Activated naive CD4-positive, alpha-beta T cell treated with anti-CD3 and anti-CD28 coated beads for 36 hours (primary cell): ENCODE measurements at regions of chr3 and their contacts with region 1.

Region 1: GRCh38 chr3:33372218-33373081 is 67.8 kb downstream of the UBP1 start:
- DNase-seq: peak; percentile 62
- H3K4me3 Mint-ChIP-seq: no peak overlapping the region
- H3K27ac Mint-ChIP-seq: no peak overlapping the region
- H3K4me1 Mint-ChIP-seq: peaks cover 5% of the 10 kb centered on the region
- H3K27me3 Mint-ChIP-seq: peaks cover 11% of the 10 kb centered on the region

Region 2: GRCh38 chr3:32374788-32375595 is 997.5 kb before region 1 on chr3:
- CTCF ChIA-PET with region 1: no interaction called
- intact Hi-C with region 1: no loop called
- DNase-seq: peak; percentile 88
- H3K4me3 Mint-ChIP-seq: no peak overlapping the region
- H3K27ac Mint-ChIP-seq: peak overlapping the region; percentile 69
- H3K4me1 Mint-ChIP-seq: peaks cover 35% of the 10 kb centered on the region
- H3K27me3 Mint-ChIP-seq: no peaks in the 10 kb centered on the region

Region 3: DNA sequence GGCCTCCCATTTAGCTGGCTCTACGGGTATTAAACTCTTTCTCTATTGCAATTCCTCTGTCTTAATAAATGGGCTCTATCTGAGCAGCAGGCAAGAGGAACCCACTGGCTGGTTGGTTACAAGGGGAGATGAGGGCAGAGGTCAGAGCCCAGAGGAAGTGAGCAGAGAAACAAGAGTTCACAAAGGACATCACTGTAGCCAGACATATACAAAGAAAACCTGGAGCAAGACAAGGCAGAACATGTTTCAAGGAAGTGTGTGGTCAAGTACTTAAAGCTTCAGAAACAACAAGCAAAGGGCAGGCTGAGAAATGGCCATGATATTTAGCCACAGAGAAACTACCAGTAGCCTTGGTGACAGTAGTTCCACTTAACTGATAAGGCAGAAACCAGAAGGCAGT is 178.1 kb before region 1 on chr3:
- CTCF ChIA-PET with region 1: no interaction called
- intact Hi-C with region 1: no loop called
- DNase-seq: no peak
- H3K4me3 Mint-ChIP-seq: no peak overlapping the region
- H3K27ac Mint-ChIP-seq: no peak overlapping the region
- H3K4me1 Mint-ChIP-seq: no peaks in the 10 kb centered on the region
- H3K27me3 Mint-ChIP-seq: peaks cover 3% of the 10 kb centered on the region

Region 4: GRCh38 chr3:33358172-33358781 is 14.2 kb before region 1 on chr3:
- CTCF ChIA-PET with region 1: interaction called, 20 read pairs
- intact Hi-C with region 1: no loop called
- DNase-seq: no peak
- H3K4me3 Mint-ChIP-seq: no peak overlapping the region
- H3K27ac Mint-ChIP-seq: no peak overlapping the region
- H3K4me1 Mint-ChIP-seq: no peaks in the 10 kb centered on the region
- H3K27me3 Mint-ChIP-seq: peaks cover 7% of the 10 kb centered on the region

Region 5: DNA sequence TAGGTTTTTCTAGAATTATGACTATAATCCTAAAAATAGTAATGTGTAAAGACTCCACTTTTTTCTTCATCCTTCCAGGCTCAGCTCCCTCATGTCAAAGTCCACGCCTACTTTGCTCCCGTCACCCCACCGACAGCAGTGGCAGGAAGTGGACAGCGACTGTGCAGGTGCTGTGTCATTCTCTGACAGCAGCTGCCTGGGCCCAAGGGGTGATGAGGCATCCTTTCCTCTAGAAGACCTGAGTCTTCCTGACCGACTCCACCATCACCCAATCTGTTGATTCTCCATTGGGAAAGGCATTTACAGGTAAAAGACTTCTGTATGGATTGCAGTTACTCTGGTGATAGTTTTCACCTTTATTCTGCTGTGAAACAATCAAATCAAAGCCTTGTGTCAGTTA is 13.0 kb after region 1 on chr3:
- CTCF ChIA-PET with region 1: interaction called, 25 read pairs
- intact Hi-C with region 1: no loop called
- DNase-seq: peak; percentile 79
- H3K4me3 Mint-ChIP-seq: no peak overlapping the region
- H3K27ac Mint-ChIP-seq: peak overlapping the region; percentile 65
- H3K4me1 Mint-ChIP-seq: peaks cover 11% of the 10 kb centered on the region
- H3K27me3 Mint-ChIP-seq: no peaks in the 10 kb centered on the region